CD4-positive, alpha-beta T cell (primary cell): ENCODE measurements at regions of chr14 and their contacts with region 1.

Region 1: GRCh38 chr14:70809543-70810244 is 381 bp upstream of the MAP3K9 start:
- DNase-seq: peak; percentile 69 to 94 (median 84)
- ATAC-seq: peak; percentile 74
- H3K4me3 ChIP-seq: peak overlapping the region; percentile 74
- H3K4me3 Mint-ChIP-seq: no peak overlapping the region
- H3K27ac ChIP-seq: peak overlapping the region in 1 of 2 donors; percentile 31
- H3K27ac Mint-ChIP-seq: no peak overlapping the region
- H3K4me1 ChIP-seq: peaks cover 15% of the 10 kb centered on the region
- H3K4me1 Mint-ChIP-seq: peaks cover 10% of the 10 kb centered on the region
- H3K27me3 ChIP-seq: no peaks in the 10 kb centered on the region
- H3K27me3 Mint-ChIP-seq: no peaks in the 10 kb centered on the region
- CTCF ChIP-seq: no peak

Region 2: DNA sequence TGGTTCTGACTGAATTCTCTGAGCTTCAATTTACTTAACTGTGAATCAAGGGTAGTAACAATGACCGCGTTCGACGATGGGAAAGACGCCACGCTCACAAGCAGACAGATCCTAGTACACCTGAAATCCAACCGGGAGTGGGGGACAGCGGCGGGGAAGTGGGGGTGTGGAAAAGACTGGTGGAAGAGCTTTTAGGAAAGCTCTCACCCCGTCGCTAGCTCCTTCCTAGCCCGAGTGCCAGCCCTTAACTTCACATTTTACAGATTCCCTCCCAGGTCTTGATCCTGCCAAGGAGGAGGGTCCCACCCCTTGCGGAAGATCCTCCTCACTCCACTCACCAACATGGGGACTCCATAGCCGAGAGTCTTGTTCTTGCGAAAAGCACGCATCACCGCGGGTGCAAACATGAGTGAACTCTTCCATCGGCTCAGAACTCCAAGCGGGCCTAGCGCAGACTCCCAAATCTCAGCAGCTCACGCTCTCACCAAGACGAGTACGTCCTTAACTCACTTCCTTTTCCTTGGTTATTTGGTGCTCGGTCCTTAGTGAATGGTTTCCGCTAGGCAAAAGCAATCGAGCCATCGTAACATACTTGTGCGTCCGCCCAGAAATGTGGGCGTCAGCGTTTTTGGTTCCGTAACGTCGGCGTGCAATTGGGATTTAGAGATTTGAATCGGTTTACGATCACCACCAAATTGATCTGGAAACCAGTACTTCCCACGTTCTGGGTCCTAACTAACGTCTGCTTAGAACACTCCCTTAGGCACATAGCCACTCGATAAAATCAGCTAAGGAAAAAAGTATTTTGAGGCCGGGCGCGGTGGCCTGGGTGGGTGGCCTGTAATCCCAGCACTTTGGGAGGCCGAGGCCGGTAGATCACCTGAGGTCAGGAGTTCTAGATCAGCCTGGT is 450.3 kb before region 1 on chr14 and contains the start of gene COX16:
- CTCF ChIA-PET with region 1: no interaction called
- POLR2A ChIA-PET with region 1: no interaction called
- intact Hi-C with region 1: loop called in 1 of 2 experiments (anchors 5 kb)
- DNase-seq: peak; percentile 63 to 92 (median 74)
- ATAC-seq: peak; percentile 95
- H3K4me3 ChIP-seq: peak within 1 kb of the TSS; percentile 74
- H3K4me3 Mint-ChIP-seq: peak within 1 kb of the TSS; percentile 97
- H3K27ac ChIP-seq: peak within 1 kb of the TSS; percentile 32 to 53
- H3K27ac Mint-ChIP-seq: peak within 1 kb of the TSS; percentile 91
- H3K4me1 ChIP-seq: peaks cover 21% of the 10 kb centered on the region
- H3K4me1 Mint-ChIP-seq: peaks cover 53% of the 10 kb centered on the region
- H3K27me3 ChIP-seq: no peaks in the 10 kb centered on the region
- H3K27me3 Mint-ChIP-seq: no peaks in the 10 kb centered on the region
- CTCF ChIP-seq: no peak
- total RNA-seq, gene COX16: 11.7 to 13.3 TPM

Region 3: GRCh38 chr14:70525691-70526090 is 284.0 kb before region 1 on chr14:
- CTCF ChIA-PET with region 1: no interaction called
- POLR2A ChIA-PET with region 1: no interaction called
- intact Hi-C with region 1: no loop called
- DNase-seq: no peak
- ATAC-seq: no peak
- H3K4me3 ChIP-seq: no peak overlapping the region
- H3K4me3 Mint-ChIP-seq: no peak overlapping the region
- H3K27ac ChIP-seq: no peak overlapping the region
- H3K27ac Mint-ChIP-seq: no peak overlapping the region
- H3K4me1 ChIP-seq: no peaks in the 10 kb centered on the region
- H3K4me1 Mint-ChIP-seq: no peaks in the 10 kb centered on the region
- H3K27me3 ChIP-seq: no peaks in the 10 kb centered on the region
- H3K27me3 Mint-ChIP-seq: no peaks in the 10 kb centered on the region
- CTCF ChIP-seq: no peak

Region 4: GRCh38 chr14:70600382-70601157 is 209.1 kb before region 1 on chr14 and contains the start of gene MED6:
- CTCF ChIA-PET with region 1: no interaction called
- POLR2A ChIA-PET with region 1: interaction called, 4 read pairs
- intact Hi-C with region 1: loop called in 1 of 2 experiments (anchors 5 kb)
- DNase-seq: peak; percentile 83 to 97 (median 91)
- ATAC-seq: peak; percentile 99
- H3K4me3 ChIP-seq: peak within 1 kb of the TSS; percentile 97
- H3K4me3 Mint-ChIP-seq: peak within 1 kb of the TSS; percentile 100
- H3K27ac ChIP-seq: peak within 1 kb of the TSS; percentile 79 to 92
- H3K27ac Mint-ChIP-seq: peak within 1 kb of the TSS; percentile 99
- H3K4me1 ChIP-seq: peaks cover 15% of the 10 kb centered on the region
- H3K4me1 Mint-ChIP-seq: peaks cover 37% of the 10 kb centered on the region
- H3K27me3 ChIP-seq: no peaks in the 10 kb centered on the region
- H3K27me3 Mint-ChIP-seq: peaks cover 5% of the 10 kb centered on the region
- CTCF ChIP-seq: no peak
- total RNA-seq, gene MED6: 90.2 to 97.2 TPM

Region 5: DNA sequence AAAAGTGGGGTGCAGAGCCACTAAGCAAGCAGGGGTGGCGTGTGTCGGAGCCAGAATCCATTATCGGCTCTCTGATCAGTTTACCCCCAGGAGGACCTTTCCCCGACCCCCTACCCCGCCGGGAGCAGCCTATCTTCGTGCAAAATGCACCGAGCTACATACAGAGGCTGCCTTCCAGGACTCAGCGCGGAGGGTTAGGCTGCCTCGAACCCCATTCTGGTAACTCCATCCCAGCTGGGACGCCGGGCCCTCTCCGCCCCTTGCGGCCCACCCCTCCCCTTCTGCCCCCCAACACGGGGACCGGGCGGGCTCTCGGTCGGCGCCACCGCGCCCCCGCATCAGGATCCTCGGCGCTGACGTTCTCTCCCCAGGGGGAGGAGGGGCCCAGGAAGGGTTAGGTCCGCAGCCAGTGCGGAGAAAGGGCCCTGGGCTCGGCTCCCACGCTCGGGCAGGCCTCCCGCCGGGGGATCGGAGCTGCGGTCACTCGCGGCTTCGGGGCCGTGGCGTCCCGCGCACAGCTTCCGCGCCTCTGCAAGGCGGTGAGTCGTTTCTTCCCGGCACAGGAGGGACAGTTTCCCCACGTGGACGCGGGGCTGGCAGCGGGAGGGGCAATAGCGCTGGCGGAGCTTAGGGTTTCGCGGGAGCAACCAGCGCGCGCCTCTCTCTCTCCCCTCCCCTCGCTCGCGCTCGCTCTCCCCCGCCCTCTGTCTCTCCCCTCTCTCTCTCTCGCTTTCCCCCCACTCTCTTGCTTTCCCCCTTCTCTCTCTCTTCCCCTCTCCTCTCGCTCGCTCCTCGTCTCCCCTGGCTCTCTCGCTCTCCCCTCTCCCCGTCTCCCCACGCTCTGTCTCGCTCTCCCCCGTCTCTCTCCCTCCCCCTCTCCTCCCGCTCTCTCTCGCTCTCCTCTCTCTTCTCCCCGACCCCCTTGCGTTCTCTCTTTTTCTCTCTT is 12.2 kb after region 1 on chr14:
- CTCF ChIA-PET with region 1: interaction called, 21 read pairs
- POLR2A ChIA-PET with region 1: interaction called, 16 read pairs
- intact Hi-C with region 1: no loop called
- DNase-seq: peak in 13 of 14 experiments; percentile 23 to 81 (median 44)
- ATAC-seq: peak; percentile 46
- H3K4me3 ChIP-seq: peak overlapping the region; percentile 66
- H3K4me3 Mint-ChIP-seq: peak overlapping the region; percentile 83
- H3K27ac ChIP-seq: no peak overlapping the region
- H3K27ac Mint-ChIP-seq: no peak overlapping the region
- H3K4me1 ChIP-seq: peaks cover 18% of the 10 kb centered on the region
- H3K4me1 Mint-ChIP-seq: peaks cover 28% of the 10 kb centered on the region
- H3K27me3 ChIP-seq: peaks cover 5 to 15% of the 10 kb centered on the region in 2 experiments
- H3K27me3 Mint-ChIP-seq: peaks cover 43% of the 10 kb centered on the region
- CTCF ChIP-seq: no peak